ENCODE measurements at regions of chr2 and their contacts with region 1.

Region 1: GRCh38 chr2:76000425-76000824 is 289.7 kb upstream of the GCFC2 start:
- DNase-seq: no peak
- ATAC-seq: no peak
- H3K4me3 Mint-ChIP-seq: no peak overlapping the region
- H3K27ac Mint-ChIP-seq: no peak overlapping the region
- H3K4me1 Mint-ChIP-seq: no peaks in the 10 kb centered on the region
- H3K27me3 Mint-ChIP-seq: no peaks in the 10 kb centered on the region
- CTCF ChIP-seq: no peak

Region 2: GRCh38 chr2:76027761-76028160 is 27.3 kb after region 1 on chr2:
- CTCF ChIA-PET with region 1: no interaction called
- POLR2A ChIA-PET with region 1: no interaction called
- intact Hi-C with region 1: loop called (anchors 2 kb)
- DNase-seq: no peak
- ATAC-seq: no peak
- H3K4me3 Mint-ChIP-seq: no peak overlapping the region
- H3K27ac Mint-ChIP-seq: no peak overlapping the region
- H3K4me1 Mint-ChIP-seq: no peaks in the 10 kb centered on the region
- H3K27me3 Mint-ChIP-seq: no peaks in the 10 kb centered on the region
- CTCF ChIP-seq: no peak

Measured in activated CD8-positive, alpha-beta T cell treated with anti-CD3 and anti-CD28 coated beads for 36 hours (primary cell).